Naive thymus-derived CD4-positive, alpha-beta T cell (primary cell): ENCODE measurements at regions of chrX and their contacts with region 1.

Region 1: GRCh38 chrX:1481636-1482529 is 29.2 kb upstream of the ASMTL start:
- DNase-seq: peak; percentile 40 to 86 (median 79)
- ATAC-seq: peak; percentile 88
- H3K4me3 ChIP-seq: peak overlapping the region; percentile 29
- H3K4me3 Mint-ChIP-seq: peak overlapping the region; percentile 76 to 92 (median 83)
- H3K27ac ChIP-seq: peak overlapping the region; percentile 76
- H3K27ac Mint-ChIP-seq: peak overlapping the region; percentile 90 to 99 (median 97)
- H3K4me1 ChIP-seq: peaks cover 28 to 56% of the 10 kb centered on the region in 2 donors
- H3K4me1 Mint-ChIP-seq: peaks cover 50 to 74% (median 69%) of the 10 kb centered on the region in 7 donors
- H3K27me3 ChIP-seq: no peaks in the 10 kb centered on the region
- H3K27me3 Mint-ChIP-seq: no peaks in the 10 kb centered on the region

Region 2: GRCh38 chrX:1468250-1468772 is 13.6 kb before region 1 on chrX:
- CTCF ChIA-PET with region 1: no interaction called
- POLR2A ChIA-PET with region 1: no interaction called
- intact Hi-C with region 1: loop called (anchors 1 kb)
- DNase-seq: peak; percentile 44 to 77 (median 60)
- ATAC-seq: peak; percentile 55
- H3K4me3 ChIP-seq: no peak overlapping the region
- H3K4me3 Mint-ChIP-seq: peak overlapping the region; percentile 51 to 87 (median 74)
- H3K27ac ChIP-seq: peak overlapping the region; percentile 71
- H3K27ac Mint-ChIP-seq: peak overlapping the region; percentile 90 to 98 (median 97)
- H3K4me1 ChIP-seq: peaks cover 83 to 86% of the 10 kb centered on the region in 2 donors
- H3K4me1 Mint-ChIP-seq: peaks cover 36 to 92% (median 84%) of the 10 kb centered on the region in 7 donors
- H3K27me3 ChIP-seq: no peaks in the 10 kb centered on the region
- H3K27me3 Mint-ChIP-seq: no peaks in the 10 kb centered on the region

Region 3: GRCh38 chrX:1491851-1492349 is 10.0 kb after region 1 on chrX:
- CTCF ChIA-PET with region 1: no interaction called
- POLR2A ChIA-PET with region 1: no interaction called
- intact Hi-C with region 1: no loop called
- DNase-seq: peak in 8 of 9 donors; percentile 46 to 73 (median 54)
- ATAC-seq: peak; percentile 82
- H3K4me3 ChIP-seq: no peak overlapping the region
- H3K4me3 Mint-ChIP-seq: peak overlapping the region in 1 of 10 donors; percentile 30
- H3K27ac ChIP-seq: no peak overlapping the region
- H3K27ac Mint-ChIP-seq: peak overlapping the region in 8 of 9 donors; percentile 72 to 90 (median 84)
- H3K4me1 ChIP-seq: no peaks in the 10 kb centered on the region
- H3K4me1 Mint-ChIP-seq: peaks cover 20 to 56% (median 34%) of the 10 kb centered on the region in 7 donors
- H3K27me3 ChIP-seq: no peaks in the 10 kb centered on the region
- H3K27me3 Mint-ChIP-seq: peaks cover 0 to 2% (median 0%) of the 10 kb centered on the region in 5 donors

Region 4: GRCh38 chrX:1521459-1521956 is 39.6 kb after region 1 on chrX:
- CTCF ChIA-PET with region 1: no interaction called
- POLR2A ChIA-PET with region 1: no interaction called
- intact Hi-C with region 1: loop called in 1 of 2 experiments (anchors 5 kb)
- DNase-seq: peak in 8 of 9 donors; percentile 46 to 81 (median 72)
- ATAC-seq: peak; percentile 90
- H3K4me3 ChIP-seq: peak overlapping the region; percentile 15
- H3K4me3 Mint-ChIP-seq: peak overlapping the region; percentile 77 to 91 (median 84)
- H3K27ac ChIP-seq: peak overlapping the region; percentile 20
- H3K27ac Mint-ChIP-seq: peak overlapping the region; percentile 84 to 97 (median 94)
- H3K4me1 ChIP-seq: peaks cover 32 to 40% of the 10 kb centered on the region in 2 donors
- H3K4me1 Mint-ChIP-seq: peaks cover 46 to 62% (median 56%) of the 10 kb centered on the region in 7 donors
- H3K27me3 ChIP-seq: no peaks in the 10 kb centered on the region
- H3K27me3 Mint-ChIP-seq: no peaks in the 10 kb centered on the region